ENCODE measurements at regions of chr20 and their contacts with region 1.

Region 1: DNA sequence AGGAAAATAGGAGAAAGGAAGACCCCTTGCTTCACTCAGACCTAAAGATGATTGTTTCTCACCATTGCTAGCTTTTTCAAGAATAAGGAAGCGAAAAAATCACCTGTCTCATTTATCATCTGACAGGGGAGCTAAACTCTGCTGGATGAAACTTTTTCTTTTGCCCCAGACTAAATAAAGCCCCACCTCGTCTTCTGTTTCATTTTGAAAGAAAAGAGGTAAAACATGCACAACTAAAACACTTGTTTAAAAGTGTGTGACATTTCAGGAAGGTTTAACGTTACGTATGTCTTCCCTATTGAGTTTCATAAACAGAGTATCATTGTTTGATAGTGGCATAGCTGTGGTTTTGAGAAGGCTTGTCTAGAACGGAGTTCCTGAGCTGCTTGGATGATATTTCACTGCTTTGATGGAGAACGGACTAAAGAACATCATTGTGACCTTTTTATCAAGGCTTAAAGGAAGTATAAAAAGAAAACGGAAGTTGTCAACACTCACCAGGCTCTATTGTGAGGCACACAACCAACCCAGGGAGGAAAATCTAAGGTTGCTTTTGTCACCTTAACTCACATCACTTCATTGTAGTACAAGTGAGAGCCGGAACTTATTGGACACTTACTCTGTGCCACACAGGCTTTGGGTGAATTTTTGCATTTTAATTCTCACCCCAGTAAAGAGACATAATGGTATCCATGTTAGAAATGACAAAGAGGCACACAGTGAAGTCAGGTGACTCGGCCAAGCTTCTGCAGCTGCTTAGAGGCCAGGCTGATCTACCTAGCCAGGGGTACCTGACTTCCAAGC is 29.5 kb downstream of the TSHZ2 start:
- DNase-seq: peak; percentile 91
- H3K4me3 ChIP-seq: peak overlapping the region; percentile 63
- H3K27ac ChIP-seq: peak overlapping the region; percentile 100
- H3K4me1 ChIP-seq: peaks cover 80% of the 10 kb centered on the region
- CTCF ChIP-seq: no peak

Region 2: DNA sequence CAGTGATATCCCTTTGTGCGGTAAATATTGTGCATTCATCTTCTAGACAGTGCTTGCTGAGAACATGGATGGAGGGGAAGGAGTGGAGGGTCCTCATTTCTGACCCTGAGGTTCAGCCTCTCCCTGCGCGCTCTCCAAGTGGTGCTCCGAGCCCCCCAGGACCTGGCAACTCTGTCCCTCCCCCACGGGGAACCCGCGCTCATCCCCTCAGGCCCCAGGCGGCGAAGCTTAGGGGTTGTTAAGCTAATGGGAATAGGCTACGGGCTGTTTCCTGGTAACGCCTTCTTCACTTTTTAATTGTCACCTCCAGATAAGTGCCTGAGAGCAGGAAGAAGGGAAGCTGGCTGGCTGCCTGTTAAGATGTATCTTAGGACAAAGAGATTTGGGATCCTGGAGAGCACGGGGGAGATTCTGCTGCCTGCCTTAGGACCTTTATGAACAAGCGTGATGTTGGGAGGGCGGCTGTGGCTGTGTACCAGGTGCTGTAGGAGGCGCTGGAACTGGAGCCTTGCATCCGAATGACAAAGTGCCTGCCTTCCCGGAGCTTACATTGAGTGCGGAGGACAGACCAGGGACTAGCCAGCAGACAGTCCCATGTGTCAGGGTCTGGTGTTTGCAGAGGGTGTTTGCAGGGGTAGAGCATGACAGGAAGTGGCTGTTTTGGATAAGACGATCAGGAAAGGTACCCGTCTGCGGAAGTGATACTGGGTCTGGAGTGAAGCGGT is 17.8 kb before region 1 on chr20:
- CTCF ChIA-PET with region 1: no interaction called
- POLR2A ChIA-PET with region 1: interaction called, 21 read pairs
- intact Hi-C with region 1: no loop called
- DNase-seq: no peak
- H3K4me3 ChIP-seq: no peak overlapping the region
- H3K27ac ChIP-seq: no peak overlapping the region
- H3K4me1 ChIP-seq: no peaks in the 10 kb centered on the region
- CTCF ChIP-seq: no peak

Region 3: GRCh38 chr20:53013847-53014246 is 12.1 kb after region 1 on chr20:
- CTCF ChIA-PET with region 1: interaction called, 4 read pairs
- POLR2A ChIA-PET with region 1: interaction called, 36 read pairs
- intact Hi-C with region 1: no loop called
- DNase-seq: no peak
- H3K4me3 ChIP-seq: peak overlapping the region; percentile 12
- H3K27ac ChIP-seq: peak overlapping the region; percentile 65
- H3K4me1 ChIP-seq: peaks cover 43% of the 10 kb centered on the region
- CTCF ChIP-seq: no peak

Region 4: GRCh38 chr20:53040693-53041589 is 39.2 kb after region 1 on chr20:
- CTCF ChIA-PET with region 1: no interaction called
- POLR2A ChIA-PET with region 1: no interaction called
- intact Hi-C with region 1: loop called (anchors 2 kb)
- DNase-seq: peak; percentile 92
- H3K4me3 ChIP-seq: peak overlapping the region; percentile 16
- H3K27ac ChIP-seq: peak overlapping the region; percentile 66
- H3K4me1 ChIP-seq: peaks cover 49% of the 10 kb centered on the region
- CTCF ChIP-seq: no peak

Region 5: GRCh38 chr20:53138454-53139262 is 137.0 kb after region 1 on chr20:
- CTCF ChIA-PET with region 1: no interaction called
- POLR2A ChIA-PET with region 1: interaction called, 20 read pairs
- intact Hi-C with region 1: loop called (anchors 1 kb)
- DNase-seq: peak; percentile 52
- H3K4me3 ChIP-seq: no peak overlapping the region
- H3K27ac ChIP-seq: peak overlapping the region; percentile 62
- H3K4me1 ChIP-seq: peaks cover 22% of the 10 kb centered on the region
- CTCF ChIP-seq: no peak

Region 6: GRCh38 chr20:53157443-53158408 is 156.0 kb after region 1 on chr20:
- CTCF ChIA-PET with region 1: no interaction called
- POLR2A ChIA-PET with region 1: interaction called, 6 read pairs
- intact Hi-C with region 1: loop called (anchors 5 kb)
- DNase-seq: peak; percentile 79
- H3K4me3 ChIP-seq: peak overlapping the region; percentile 35
- H3K27ac ChIP-seq: peak overlapping the region; percentile 83
- H3K4me1 ChIP-seq: peaks cover 40% of the 10 kb centered on the region
- CTCF ChIP-seq: peak; percentile 83

Region 7: DNA sequence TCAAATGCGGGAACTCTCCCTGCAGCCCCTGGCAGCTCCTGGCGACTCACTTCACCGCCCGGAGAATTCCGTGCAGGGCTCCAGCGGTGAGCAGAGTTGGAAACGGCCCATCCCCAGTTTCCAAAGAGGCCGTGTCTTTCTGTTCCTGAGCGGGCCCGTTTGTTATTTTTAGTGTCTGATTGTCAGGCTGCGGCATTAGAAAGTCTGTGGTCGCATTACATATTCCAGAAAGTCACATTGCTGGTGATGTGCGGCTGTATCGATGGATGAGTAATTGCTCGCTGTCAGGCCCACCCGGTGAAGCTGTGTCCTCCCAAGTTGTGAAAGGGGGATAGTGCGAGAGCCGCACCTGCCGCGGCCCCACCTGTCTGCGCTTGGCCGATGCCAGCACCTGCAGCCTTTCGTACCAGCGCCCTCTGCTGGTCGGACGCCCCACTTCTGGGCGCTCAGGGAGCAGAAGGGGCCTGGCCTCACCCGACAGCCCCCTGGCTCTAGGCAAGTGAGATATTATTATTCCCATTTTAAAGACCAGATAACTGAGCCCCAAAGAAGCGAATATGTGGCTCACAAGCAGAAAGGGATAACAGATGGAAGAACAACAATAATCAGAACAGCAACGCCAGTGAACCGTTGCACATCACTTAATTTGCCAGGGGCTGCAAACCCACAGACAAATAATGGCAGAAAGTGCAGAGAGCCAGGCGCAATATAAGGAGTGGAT is 215.3 kb after region 1 on chr20:
- CTCF ChIA-PET with region 1: no interaction called
- POLR2A ChIA-PET with region 1: no interaction called
- intact Hi-C with region 1: loop called (anchors 1 kb)
- DNase-seq: peak; percentile 77
- H3K4me3 ChIP-seq: no peak overlapping the region
- H3K27ac ChIP-seq: no peak overlapping the region
- H3K4me1 ChIP-seq: peaks cover 4% of the 10 kb centered on the region
- CTCF ChIP-seq: peak; percentile 95